Mammary epithelial cell (primary cell): ENCODE measurements at regions of chr4 and their contacts with region 1.

Region 1: DNA sequence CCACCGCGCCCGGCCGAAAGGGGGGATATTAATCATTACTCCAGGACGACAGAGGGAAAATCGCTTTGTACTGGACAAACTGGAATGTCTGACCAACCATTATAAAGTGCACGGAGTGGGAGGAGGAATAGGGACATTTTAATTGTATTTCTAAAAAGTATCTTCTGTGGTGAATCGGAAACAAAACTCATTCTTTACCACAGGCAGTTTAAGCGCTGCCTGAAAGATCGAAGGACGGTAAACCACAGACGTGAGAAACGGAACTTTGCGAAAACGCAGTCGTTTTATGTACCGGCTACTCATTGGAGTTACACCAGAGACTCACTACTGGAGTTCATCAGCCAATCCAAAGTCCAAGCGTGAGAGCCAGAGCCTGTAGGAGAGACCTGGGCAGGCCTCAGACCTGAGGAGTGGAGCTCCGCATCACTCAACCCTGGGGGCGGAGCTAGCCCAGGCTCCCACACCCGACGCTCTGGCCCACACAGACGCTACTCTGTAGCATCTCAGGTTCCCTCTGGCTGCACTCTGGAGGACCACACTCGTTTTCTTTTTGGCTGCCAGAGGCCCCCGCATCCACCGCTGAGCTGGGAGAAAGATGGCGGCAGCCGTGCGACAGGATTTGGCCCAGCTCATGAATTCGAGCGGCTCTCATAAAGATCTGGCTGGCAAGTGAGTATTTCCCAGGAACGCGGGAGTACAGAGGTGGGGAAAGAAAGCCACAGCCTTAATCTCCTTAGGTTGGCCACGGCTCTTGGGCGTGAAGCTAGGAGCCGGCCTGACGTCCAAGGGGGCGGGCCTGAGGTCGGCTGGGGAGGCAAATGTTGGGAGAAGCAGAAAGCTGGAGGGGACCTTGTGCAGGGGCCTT is at the start of gene COPS4:
- DNase-seq: peak; percentile 100
- H3K4me3 ChIP-seq: peak within 1 kb of the TSS; percentile 71 to 83 (median 77)
- H3K27ac ChIP-seq: peak within 1 kb of the TSS; percentile 83
- H3K4me1 ChIP-seq: peaks cover 10% of the 10 kb centered on the region
- H3K27me3 ChIP-seq: no peaks in the 10 kb centered on the region
- CTCF ChIP-seq: peak; percentile 8 to 53
- total RNA-seq, gene COPS4: 34.1 to 69.5 TPM

Region 2: DNA sequence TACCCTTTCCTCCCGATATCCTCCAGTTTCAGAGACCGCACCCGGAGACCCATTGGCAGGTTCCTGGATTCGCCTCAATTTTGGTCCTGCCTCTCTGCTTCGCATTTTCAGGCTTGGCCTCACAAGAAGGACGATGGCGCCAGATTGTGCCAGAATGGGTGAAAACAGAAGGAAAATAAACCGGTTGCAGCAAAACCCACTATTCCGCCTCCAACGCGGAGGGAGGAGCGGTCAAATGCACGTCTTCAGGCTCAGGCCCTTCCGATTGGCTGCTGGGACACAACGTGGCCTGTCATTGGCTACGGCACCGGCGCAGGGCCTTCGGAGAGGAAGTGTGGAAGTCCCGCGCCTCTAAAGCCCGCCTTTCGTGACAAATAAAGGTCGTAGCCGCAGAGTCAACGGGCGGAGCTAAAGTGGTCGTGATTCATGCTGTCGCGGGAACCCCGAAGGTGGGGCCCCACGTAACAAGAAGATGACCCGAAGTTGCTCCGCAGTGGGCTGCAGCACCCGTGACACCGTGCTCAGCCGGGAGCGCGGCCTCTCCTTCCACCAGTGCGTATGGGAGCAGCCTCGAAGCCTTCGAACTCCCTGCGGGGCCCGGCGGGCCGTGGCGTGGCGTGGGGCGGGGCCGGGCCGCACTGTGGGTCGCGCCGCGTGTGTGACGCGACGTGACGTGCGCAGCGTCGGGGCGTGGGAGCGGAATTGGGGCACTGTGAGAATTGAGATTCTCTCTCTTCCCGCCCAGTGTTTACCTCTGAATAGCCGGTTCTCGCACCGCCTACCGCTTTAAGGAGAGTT is 134.3 kb before region 1 on chr4 and contains the start of gene THAP9:
- CTCF ChIA-PET with region 1: no interaction called
- dilution Hi-C with region 1: no loop called
- in situ Hi-C with region 1: no loop called
- intact Hi-C with region 1: loop called (anchors 1 kb)
- DNase-seq: peak; percentile 100
- H3K4me3 ChIP-seq: peak within 1 kb of the TSS; percentile 69 to 90 (median 70)
- H3K27ac ChIP-seq: peak within 1 kb of the TSS; percentile 96
- H3K4me1 ChIP-seq: peaks cover 2% of the 10 kb centered on the region
- H3K27me3 ChIP-seq: no peaks in the 10 kb centered on the region
- CTCF ChIP-seq: no peak
- total RNA-seq, gene THAP9: 2.8 to 3.0 TPM